CD8-positive, alpha-beta memory T cell (primary cell): ENCODE measurements at regions of chr15 and their contacts with region 1.

Region 1: DNA sequence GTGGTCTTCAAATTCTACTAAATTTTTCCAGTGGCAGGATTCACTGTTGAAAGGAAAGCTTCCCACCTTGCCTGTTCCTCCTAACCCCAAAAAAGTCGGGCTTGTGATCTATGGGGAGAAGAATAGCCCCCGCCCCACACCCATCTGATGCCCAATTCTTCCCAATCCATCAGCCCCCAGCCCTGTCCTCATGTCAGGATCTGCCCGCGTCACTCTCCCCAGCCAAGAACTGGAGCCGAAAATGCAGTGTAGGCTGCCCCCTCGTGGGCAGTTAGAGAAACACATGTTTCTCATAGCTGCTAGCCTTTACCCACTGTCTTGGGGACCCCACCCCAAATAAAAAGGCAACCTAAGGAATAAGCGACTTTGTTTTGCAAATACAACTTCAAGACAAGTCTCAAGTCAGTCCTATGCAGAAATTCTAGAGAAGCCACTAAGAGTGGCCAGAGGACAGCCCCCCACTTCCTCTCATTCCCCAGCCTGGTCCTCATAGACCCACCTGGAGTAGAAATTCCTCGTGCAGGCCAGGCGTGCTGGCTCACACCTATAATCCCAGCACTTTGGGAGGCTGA is 13.0 kb upstream of the CSK start:
- DNase-seq: peak; percentile 50 to 76 (median 58)
- H3K4me3 ChIP-seq: no peak overlapping the region
- H3K4me3 Mint-ChIP-seq: peak overlapping the region in 1 of 7 donors; percentile 35
- H3K27ac ChIP-seq: no peak overlapping the region
- H3K27ac Mint-ChIP-seq: peak overlapping the region in 3 of 8 donors; percentile 3 to 21 (median 17)
- H3K4me1 ChIP-seq: peaks cover 17% of the 10 kb centered on the region
- H3K4me1 Mint-ChIP-seq: peaks cover 13 to 23% (median 20%) of the 10 kb centered on the region in 3 donors
- H3K27me3 ChIP-seq: no peaks in the 10 kb centered on the region
- H3K27me3 Mint-ChIP-seq: peaks cover 5 to 8% of the 10 kb centered on the region in 2 donors

Region 2: GRCh38 chr15:74373731-74374647 is 394.9 kb before region 1 on chr15:
- CTCF ChIA-PET with region 1: interaction called, 12 read pairs
- POLR2A ChIA-PET with region 1: no interaction called
- DNase-seq: peak; percentile 88 to 97 (median 93)
- H3K4me3 ChIP-seq: peak overlapping the region; percentile 85
- H3K4me3 Mint-ChIP-seq: peak overlapping the region; percentile 66 to 95 (median 82)
- H3K27ac ChIP-seq: peak overlapping the region; percentile 54
- H3K27ac Mint-ChIP-seq: peak overlapping the region; percentile 53 to 87 (median 75)
- H3K4me1 ChIP-seq: peaks cover 10% of the 10 kb centered on the region
- H3K4me1 Mint-ChIP-seq: peaks cover 11 to 15% (median 13%) of the 10 kb centered on the region in 3 donors
- H3K27me3 ChIP-seq: no peaks in the 10 kb centered on the region
- H3K27me3 Mint-ChIP-seq: peaks cover 5 to 15% of the 10 kb centered on the region in 2 donors

Region 3: DNA sequence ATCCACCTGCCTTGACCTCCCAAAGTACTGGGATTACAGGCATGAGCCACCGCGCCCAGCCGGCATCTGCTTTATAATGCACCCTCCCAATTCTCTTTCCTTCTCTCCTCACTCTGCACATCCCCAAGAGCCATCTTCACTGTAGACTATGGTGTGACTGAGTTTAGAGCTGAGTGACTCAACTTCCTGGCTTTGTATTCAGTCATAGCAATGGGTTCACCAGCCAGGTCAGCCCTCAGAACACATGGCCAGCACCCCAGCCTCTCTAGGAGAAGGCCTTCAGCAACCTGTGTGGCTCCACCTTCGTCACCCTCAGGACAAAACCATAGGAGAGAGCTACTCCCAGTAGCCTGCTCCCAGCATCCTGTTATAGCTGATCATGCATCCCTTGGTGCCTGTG is 194.9 kb before region 1 on chr15:
- CTCF ChIA-PET with region 1: no interaction called
- POLR2A ChIA-PET with region 1: no interaction called
- DNase-seq: no peak
- H3K4me3 ChIP-seq: no peak overlapping the region
- H3K4me3 Mint-ChIP-seq: no peak overlapping the region
- H3K27ac ChIP-seq: no peak overlapping the region
- H3K27ac Mint-ChIP-seq: peak overlapping the region in 1 of 8 donors; percentile 57
- H3K4me1 ChIP-seq: no peaks in the 10 kb centered on the region
- H3K4me1 Mint-ChIP-seq: peaks cover 4 to 18% (median 13%) of the 10 kb centered on the region in 3 donors
- H3K27me3 ChIP-seq: no peaks in the 10 kb centered on the region
- H3K27me3 Mint-ChIP-seq: no peaks in the 10 kb centered on the region

Region 4: DNA sequence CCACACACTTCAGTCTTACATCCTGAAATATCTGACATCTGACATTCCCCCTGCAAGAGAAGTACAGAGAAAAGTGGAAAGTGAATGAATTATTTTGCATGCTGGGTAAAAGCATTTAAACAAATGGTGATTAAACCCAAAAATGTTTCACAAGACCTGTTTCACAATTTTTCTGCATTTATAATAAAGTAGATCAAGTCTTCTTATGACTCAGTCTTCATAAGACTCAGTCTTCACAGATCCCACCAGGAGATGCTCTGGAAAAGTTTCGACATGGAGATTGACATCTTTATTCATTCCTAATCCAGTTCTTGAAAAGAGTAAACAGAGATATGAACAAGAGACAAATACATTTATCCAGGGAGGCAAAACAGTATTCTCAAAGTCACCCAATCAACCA is 59.8 kb before region 1 on chr15:
- CTCF ChIA-PET with region 1: no interaction called
- POLR2A ChIA-PET with region 1: no interaction called
- DNase-seq: no peak
- H3K4me3 ChIP-seq: no peak overlapping the region
- H3K4me3 Mint-ChIP-seq: no peak overlapping the region
- H3K27ac ChIP-seq: no peak overlapping the region
- H3K27ac Mint-ChIP-seq: no peak overlapping the region
- H3K4me1 ChIP-seq: no peaks in the 10 kb centered on the region
- H3K4me1 Mint-ChIP-seq: peaks cover 5 to 9% (median 6%) of the 10 kb centered on the region in 3 donors
- H3K27me3 ChIP-seq: no peaks in the 10 kb centered on the region
- H3K27me3 Mint-ChIP-seq: peaks cover 11 to 15% of the 10 kb centered on the region in 2 donors

Region 5: GRCh38 chr15:74748322-74748946 is 20.4 kb before region 1 on chr15 and contains the start of gene CYP1A2:
- CTCF ChIA-PET with region 1: no interaction called
- POLR2A ChIA-PET with region 1: no interaction called
- DNase-seq: no peak
- H3K4me3 ChIP-seq: no peak within 1 kb of the TSS
- H3K4me3 Mint-ChIP-seq: no peak within 1 kb of the TSS
- H3K27ac ChIP-seq: no peak within 1 kb of the TSS
- H3K27ac Mint-ChIP-seq: no peak within 1 kb of the TSS
- H3K4me1 ChIP-seq: no peaks in the 10 kb centered on the region
- H3K4me1 Mint-ChIP-seq: no peaks in the 10 kb centered on the region
- H3K27me3 ChIP-seq: no peaks in the 10 kb centered on the region
- H3K27me3 Mint-ChIP-seq: peaks cover 0 to 2% of the 10 kb centered on the region in 2 donors
- total RNA-seq, gene CYP1A2: not detected

Region 6: GRCh38 chr15:74758736-74759135 is 10.1 kb before region 1 on chr15:
- CTCF ChIA-PET with region 1: interaction called, 23 read pairs
- POLR2A ChIA-PET with region 1: no interaction called
- DNase-seq: no peak
- H3K4me3 ChIP-seq: no peak overlapping the region
- H3K4me3 Mint-ChIP-seq: no peak overlapping the region
- H3K27ac ChIP-seq: no peak overlapping the region
- H3K27ac Mint-ChIP-seq: no peak overlapping the region
- H3K4me1 ChIP-seq: no peaks in the 10 kb centered on the region
- H3K4me1 Mint-ChIP-seq: no peaks in the 10 kb centered on the region
- H3K27me3 ChIP-seq: peaks cover 3% of the 10 kb centered on the region
- H3K27me3 Mint-ChIP-seq: peaks cover 5 to 17% of the 10 kb centered on the region in 2 donors

Region 7: GRCh38 chr15:74793135-74794028 is 24.5 kb after region 1 on chr15:
- CTCF ChIA-PET with region 1: interaction called, 1,086 read pairs
- POLR2A ChIA-PET with region 1: interaction called, 20 read pairs
- DNase-seq: peak; percentile 71 to 85 (median 74)
- H3K4me3 ChIP-seq: peak overlapping the region; percentile 46
- H3K4me3 Mint-ChIP-seq: peak overlapping the region; percentile 66 to 91 (median 85)
- H3K27ac ChIP-seq: no peak overlapping the region
- H3K27ac Mint-ChIP-seq: peak overlapping the region; percentile 81 to 98 (median 93)
- H3K4me1 ChIP-seq: peaks cover 99% of the 10 kb centered on the region
- H3K4me1 Mint-ChIP-seq: peaks cover 84 to 93% (median 89%) of the 10 kb centered on the region in 3 donors
- H3K27me3 ChIP-seq: no peaks in the 10 kb centered on the region
- H3K27me3 Mint-ChIP-seq: no peaks in the 10 kb centered on the region

Region 8: GRCh38 chr15:74826364-74826819 is 57.5 kb after region 1 on chr15 and contains the start of gene CPLX3:
- CTCF ChIA-PET with region 1: interaction called, 11 read pairs
- POLR2A ChIA-PET with region 1: no interaction called
- DNase-seq: peak; percentile 28 to 62 (median 44)
- H3K4me3 ChIP-seq: no peak within 1 kb of the TSS
- H3K4me3 Mint-ChIP-seq: no peak within 1 kb of the TSS
- H3K27ac ChIP-seq: no peak within 1 kb of the TSS
- H3K27ac Mint-ChIP-seq: no peak within 1 kb of the TSS
- H3K4me1 ChIP-seq: no peaks in the 10 kb centered on the region
- H3K4me1 Mint-ChIP-seq: peaks cover 0 to 7% (median 1%) of the 10 kb centered on the region in 3 donors
- H3K27me3 ChIP-seq: peaks cover 15% of the 10 kb centered on the region
- H3K27me3 Mint-ChIP-seq: peaks cover 18 to 33% of the 10 kb centered on the region in 2 donors
- total RNA-seq, gene CPLX3: not detected

Region 9: GRCh38 chr15:74906446-74907162 is 137.7 kb after region 1 on chr15 and contains the start of gene FAM219B:
- CTCF ChIA-PET with region 1: interaction called, 46 read pairs
- POLR2A ChIA-PET with region 1: no interaction called
- DNase-seq: peak; percentile 68 to 83 (median 71)
- H3K4me3 ChIP-seq: peak within 1 kb of the TSS; percentile 93
- H3K4me3 Mint-ChIP-seq: peak within 1 kb of the TSS; percentile 92 to 99 (median 99)
- H3K27ac ChIP-seq: peak within 1 kb of the TSS; percentile 80
- H3K27ac Mint-ChIP-seq: peak within 1 kb of the TSS; percentile 94 to 99 (median 98)
- H3K4me1 ChIP-seq: peaks cover 32% of the 10 kb centered on the region
- H3K4me1 Mint-ChIP-seq: peaks cover 38 to 42% (median 41%) of the 10 kb centered on the region in 3 donors
- H3K27me3 ChIP-seq: no peaks in the 10 kb centered on the region
- H3K27me3 Mint-ChIP-seq: no peaks in the 10 kb centered on the region
- total RNA-seq, gene FAM219B: 45.0 to 47.7 TPM